Activated CD4-positive, alpha-beta T cell treated with anti-CD3 and anti-CD28 coated beads, Interleukin-2, amount 10 ng/mL, durations not matched to agents 7 days and 5 days (primary cell): ENCODE measurements at regions of chr2 and their contacts with region 1.

Region 1: DNA sequence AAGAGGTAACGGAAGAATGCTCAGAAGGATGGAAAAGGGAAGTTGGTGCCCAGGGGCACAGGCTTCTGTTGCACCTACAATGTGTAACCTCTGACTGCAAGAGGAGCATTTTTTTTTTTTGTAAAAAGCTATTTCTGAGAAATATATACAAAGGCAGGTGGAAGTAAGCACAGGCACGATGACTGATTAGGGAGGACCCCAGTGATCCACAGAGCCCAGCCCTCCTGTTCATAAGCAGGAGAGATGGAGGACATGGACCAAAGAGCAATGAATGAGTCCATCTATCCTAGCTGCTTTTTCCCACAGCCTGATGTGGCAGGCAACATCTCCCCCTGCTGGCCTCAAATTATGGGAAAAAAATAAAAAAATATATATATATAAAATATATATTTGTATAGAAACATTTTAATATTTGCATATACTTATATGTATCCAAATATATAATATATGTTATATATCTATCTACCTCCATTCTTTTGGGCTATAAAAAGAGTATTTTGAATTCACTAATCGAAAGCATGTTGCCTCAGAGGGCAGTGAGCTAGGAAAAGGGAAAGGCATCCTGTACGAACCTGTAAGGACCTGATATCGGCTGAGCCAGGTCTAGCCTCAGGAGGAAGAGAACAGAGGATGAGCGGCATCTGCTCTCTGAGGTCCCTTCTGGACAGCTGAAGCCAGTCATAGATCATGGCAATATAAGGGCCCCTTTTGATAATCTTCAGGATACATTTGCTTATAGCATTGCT is 166.0 kb upstream of the STK17B start:
- DNase-seq: peak; percentile 24
- H3K4me3 Mint-ChIP-seq: no peak overlapping the region
- H3K27ac Mint-ChIP-seq: no peak overlapping the region
- H3K4me1 Mint-ChIP-seq: peaks cover 4% of the 10 kb centered on the region
- H3K27me3 Mint-ChIP-seq: peaks cover 5% of the 10 kb centered on the region

Region 2: GRCh38 chr2:196068271-196069209 is 268.8 kb before region 1 on chr2 and contains the start of gene DNAH7:
- CTCF ChIA-PET with region 1: interaction called, 12 read pairs
- POLR2A ChIA-PET with region 1: no interaction called
- DNase-seq: peak; percentile 93
- H3K4me3 Mint-ChIP-seq: peak within 1 kb of the TSS; percentile 76
- H3K27ac Mint-ChIP-seq: peak within 1 kb of the TSS; percentile 63
- H3K4me1 Mint-ChIP-seq: peaks cover 10% of the 10 kb centered on the region
- H3K27me3 Mint-ChIP-seq: peaks cover 22% of the 10 kb centered on the region
- total RNA-seq, gene DNAH7: 0.04 TPM in 1 of 2 experiments, not detected in the other

Region 3: DNA sequence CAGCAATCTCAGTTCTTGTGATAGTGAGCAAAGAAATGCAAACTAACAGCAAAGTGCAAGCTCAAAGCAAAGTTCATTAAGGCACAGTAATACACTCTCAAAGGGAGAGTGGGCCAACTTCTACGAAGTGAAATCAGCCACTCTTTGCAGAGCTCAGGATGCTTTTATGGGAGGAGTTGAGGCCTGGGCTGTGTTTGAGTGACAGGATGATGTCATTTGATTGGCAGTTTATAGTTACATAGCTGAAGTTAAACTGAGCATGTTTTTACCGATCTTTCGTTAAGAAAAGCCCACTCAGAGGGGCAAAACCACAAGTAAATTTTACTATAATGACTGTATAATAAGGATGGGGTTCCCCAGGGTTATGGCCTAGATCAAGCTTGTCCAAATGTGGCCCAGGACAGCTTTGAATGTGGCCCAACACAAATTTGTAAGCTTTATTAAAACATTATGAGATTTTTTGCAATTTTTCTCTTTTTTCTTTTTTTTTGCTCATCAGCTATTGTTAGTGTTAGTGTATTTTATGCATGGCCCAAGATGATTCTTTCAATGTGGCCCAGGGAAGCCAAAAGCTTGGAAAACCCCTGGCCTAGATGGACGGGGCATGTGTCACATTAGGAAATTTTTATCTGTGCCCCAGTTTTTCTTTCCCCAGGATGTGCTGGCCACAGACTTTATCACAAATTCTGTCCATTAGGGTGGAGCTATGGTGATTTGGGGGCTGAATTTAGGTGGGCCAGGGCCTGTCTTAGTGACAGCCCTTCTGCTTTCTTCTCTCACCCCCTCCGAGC is 260.4 kb before region 1 on chr2:
- CTCF ChIA-PET with region 1: interaction called, 29 read pairs
- POLR2A ChIA-PET with region 1: no interaction called
- DNase-seq: no peak
- H3K4me3 Mint-ChIP-seq: no peak overlapping the region
- H3K27ac Mint-ChIP-seq: no peak overlapping the region
- H3K4me1 Mint-ChIP-seq: peaks cover 13% of the 10 kb centered on the region
- H3K27me3 Mint-ChIP-seq: no peaks in the 10 kb centered on the region